SK-N-SH (cell line): ENCODE measurements at regions of chrX and their contacts with region 1.

Region 1: GRCh38 chrX:100674705-100675104 is 30.7 kb downstream of the SRPX2 start:
- DNase-seq: no peak
- H3K4me3 ChIP-seq: no peak overlapping the region
- H3K27ac ChIP-seq: no peak overlapping the region
- H3K4me1 ChIP-seq: no peaks in the 10 kb centered on the region
- H3K27me3 ChIP-seq: peaks cover 6% of the 10 kb centered on the region; the same call in 1 of the 2 replicates
- CTCF ChIP-seq: no peak
- EP300 ChIP-seq: no peak
- RAD21 ChIP-seq: no peak

Region 2: DNA sequence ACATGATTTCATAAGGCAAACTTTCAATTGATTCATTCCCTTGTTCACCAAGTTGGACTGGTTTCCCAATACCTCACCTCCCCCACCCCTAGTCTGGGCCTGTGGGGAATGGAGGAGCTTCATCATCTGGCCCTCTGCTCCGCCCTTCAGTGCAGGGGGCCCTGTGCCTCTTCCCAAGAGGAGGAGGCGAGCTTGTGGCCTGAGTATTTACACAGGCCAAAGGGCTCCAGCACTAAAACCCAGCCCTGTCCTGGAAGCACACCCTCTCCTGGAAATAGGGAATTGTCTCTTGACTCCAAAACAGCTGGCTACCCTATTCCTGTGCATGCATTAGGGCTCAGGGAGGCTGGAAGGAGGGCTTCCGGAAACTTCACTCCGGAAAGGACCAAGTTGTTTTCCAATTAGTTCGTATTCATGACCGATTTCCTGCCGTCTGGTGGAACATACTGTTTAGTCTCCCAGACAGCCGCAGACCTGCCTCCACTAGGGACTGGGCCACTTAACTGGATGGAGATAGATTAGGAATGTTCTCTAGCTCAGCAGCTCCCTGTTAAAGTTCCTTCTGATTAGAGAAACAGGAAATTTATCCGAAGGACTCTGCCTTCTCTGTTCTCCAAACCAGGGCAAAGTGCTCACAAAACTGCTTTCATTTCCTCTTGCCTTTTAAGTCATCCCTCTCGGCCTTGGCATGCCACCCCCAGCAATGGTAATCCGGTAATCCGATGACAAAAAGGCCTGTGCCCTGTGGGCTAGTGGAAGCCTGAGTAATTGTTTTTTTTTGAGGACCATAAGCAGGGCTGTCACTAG is 25.0 kb before region 1 on chrX:
- CTCF ChIA-PET with region 1: interaction called, 13 read pairs
- POLR2A ChIA-PET with region 1: no interaction called
- DNase-seq: no peak
- H3K4me3 ChIP-seq: no peak overlapping the region
- H3K27ac ChIP-seq: no peak overlapping the region
- H3K4me1 ChIP-seq: 0 out of 4 replicates have a peak, but pooled peaks cover 0 to 6% of the 10 kb centered on the region in 2 experiments
- H3K27me3 ChIP-seq: 0 out of 2 replicates have a peak, but pooled peaks cover 4% of the 10 kb centered on the region
- CTCF ChIP-seq: no peak
- EP300 ChIP-seq: no peak
- RAD21 ChIP-seq: no peak

Region 3: GRCh38 chrX:100662796-100663195 is 11.9 kb before region 1 on chrX:
- CTCF ChIA-PET with region 1: interaction called, 14 read pairs
- POLR2A ChIA-PET with region 1: no interaction called
- DNase-seq: no peak
- H3K4me3 ChIP-seq: no peak overlapping the region
- H3K27ac ChIP-seq: no peak overlapping the region
- H3K4me1 ChIP-seq: no peaks in the 10 kb centered on the region
- H3K27me3 ChIP-seq: no peaks in the 10 kb centered on the region; the same call in 1 of the 2 replicates
- CTCF ChIP-seq: no peak
- EP300 ChIP-seq: no peak
- RAD21 ChIP-seq: no peak

Region 4: GRCh38 chrX:100685284-100685996 is 10.7 kb after region 1 on chrX:
- CTCF ChIA-PET with region 1: interaction called, 61 read pairs
- POLR2A ChIA-PET with region 1: no interaction called
- DNase-seq: peak; percentile 65
- H3K4me3 ChIP-seq: no peak overlapping the region; a peak in 1 of 4 replicates
- H3K27ac ChIP-seq: 0 out of 4 replicates have a peak overlapping the region, but pooled peaks of 1 of the 2 experiments have one; percentile 14
- H3K4me1 ChIP-seq: no peaks in the 10 kb centered on the region
- H3K27me3 ChIP-seq: peaks cover 3% of the 10 kb centered on the region; the same call in 1 of the 2 replicates
- CTCF ChIP-seq: peak; percentile 91
- EP300 ChIP-seq: no peak
- RAD21 ChIP-seq: peak; percentile 95

Region 5: DNA sequence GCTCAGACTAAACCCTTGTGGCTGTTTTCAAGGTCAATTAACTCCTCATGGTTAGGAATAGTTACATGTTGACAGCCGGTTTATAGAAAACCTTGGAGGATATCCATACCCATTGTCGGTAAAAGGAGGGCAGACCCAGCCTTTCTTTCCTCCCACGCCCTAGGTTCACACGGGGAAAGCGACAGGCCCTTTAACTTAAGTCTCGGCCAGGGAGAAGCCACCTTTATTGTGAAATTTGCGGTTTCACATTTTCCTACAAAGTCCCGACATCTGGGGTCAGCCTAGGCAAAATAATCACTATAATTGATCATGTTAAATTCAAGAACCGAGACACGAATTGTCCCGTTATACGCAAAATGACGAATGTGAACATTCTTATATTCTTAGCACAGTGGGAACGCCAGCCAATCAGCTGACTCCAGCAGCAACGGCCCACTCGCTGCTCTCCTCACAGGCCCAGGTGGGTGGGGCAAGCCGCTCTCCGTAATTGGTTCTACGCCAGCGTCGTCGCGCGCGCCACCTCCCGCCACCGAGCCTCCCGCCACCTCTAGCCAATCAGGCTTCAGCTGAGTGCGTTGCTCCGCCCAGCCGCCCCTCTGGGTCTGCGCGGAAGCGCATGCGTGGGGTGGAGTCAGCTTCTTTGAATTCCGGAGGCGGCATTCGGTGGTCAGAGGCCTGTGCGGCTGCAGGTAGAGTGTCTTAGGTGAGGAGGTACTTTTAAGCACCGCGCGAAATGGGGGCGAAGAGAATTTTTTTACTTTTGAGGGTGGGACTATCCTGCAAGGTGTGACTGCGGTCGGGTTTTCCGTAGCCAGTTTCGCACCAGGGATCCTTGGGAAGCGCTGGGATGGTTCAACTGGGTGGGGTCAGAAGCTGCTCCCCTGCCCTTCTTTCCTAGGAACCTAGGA is 423.1 kb after region 1 on chrX and contains the start of gene CENPI:
- CTCF ChIA-PET with region 1: no interaction called
- POLR2A ChIA-PET with region 1: no interaction called
- DNase-seq: peak; percentile 93
- H3K4me3 ChIP-seq: peak within 1 kb of the TSS; percentile 55
- H3K27ac ChIP-seq: peak within 1 kb of the TSS; percentile 62 to 71
- H3K4me1 ChIP-seq: no peaks in the 10 kb centered on the region
- H3K27me3 ChIP-seq: no peaks in the 10 kb centered on the region; the same call in 1 of the 2 replicates
- CTCF ChIP-seq: no peak
- EP300 ChIP-seq: no peak
- RAD21 ChIP-seq: no peak
- polyA plus RNA-seq, gene CENPI: 2.4 and 2.6 TPM in 2 replicates